ENCODE measurements at regions of chr7 and their contacts with region 1.

Region 1: GRCh38 chr7:100889761-100890634 is 483 bp upstream of the UFSP1 start:
- DNase-seq: peak; percentile 95 to 97 (median 96)
- ATAC-seq: peak; percentile 91 to 97 (median 94)
- H3K4me3 ChIP-seq: peak overlapping the region; percentile 48 to 81 (median 73)
- H3K27ac ChIP-seq: peak overlapping the region; percentile 76 to 93 (median 90)
- H3K4me1 ChIP-seq: peaks cover 4 to 59% (median 30%) of the 10 kb centered on the region in 12 donors
- H3K27me3 ChIP-seq: peaks cover 0 to 36% (median 6%) of the 10 kb centered on the region in 9 donors
- CTCF ChIP-seq: peak in 3 of 12 donors; percentile 15 to 26 (median 17)
- POLR2A ChIP-seq: peak in 1 of 2 donors; percentile 61

Region 2: GRCh38 chr7:100626530-100627237 is 263.3 kb before region 1 on chr7:
- intact Hi-C with region 1: no loop called
- DNase-seq: peak; percentile 78 to 91 (median 84)
- ATAC-seq: peak; percentile 89 to 99 (median 96)
- H3K4me3 ChIP-seq: peak overlapping the region in 9 of 12 donors; percentile 26 to 51 (median 43)
- H3K27ac ChIP-seq: peak overlapping the region in 1 of 12 donors; percentile 67
- H3K4me1 ChIP-seq: peaks cover 0 to 12% (median 4%) of the 10 kb centered on the region in 12 donors
- H3K27me3 ChIP-seq: no peaks in the 10 kb centered on the region
- CTCF ChIP-seq: no peak
- POLR2A ChIP-seq: no peak

Region 3: GRCh38 chr7:100763556-100764140 is 126.3 kb before region 1 on chr7:
- intact Hi-C with region 1: no loop called
- DNase-seq: no peak
- ATAC-seq: no peak
- H3K4me3 ChIP-seq: no peak overlapping the region
- H3K27ac ChIP-seq: no peak overlapping the region
- H3K4me1 ChIP-seq: no peaks in the 10 kb centered on the region
- H3K27me3 ChIP-seq: peaks cover 0 to 7% (median 0%) of the 10 kb centered on the region in 9 donors
- CTCF ChIP-seq: no peak
- POLR2A ChIP-seq: no peak

Region 4: DNA sequence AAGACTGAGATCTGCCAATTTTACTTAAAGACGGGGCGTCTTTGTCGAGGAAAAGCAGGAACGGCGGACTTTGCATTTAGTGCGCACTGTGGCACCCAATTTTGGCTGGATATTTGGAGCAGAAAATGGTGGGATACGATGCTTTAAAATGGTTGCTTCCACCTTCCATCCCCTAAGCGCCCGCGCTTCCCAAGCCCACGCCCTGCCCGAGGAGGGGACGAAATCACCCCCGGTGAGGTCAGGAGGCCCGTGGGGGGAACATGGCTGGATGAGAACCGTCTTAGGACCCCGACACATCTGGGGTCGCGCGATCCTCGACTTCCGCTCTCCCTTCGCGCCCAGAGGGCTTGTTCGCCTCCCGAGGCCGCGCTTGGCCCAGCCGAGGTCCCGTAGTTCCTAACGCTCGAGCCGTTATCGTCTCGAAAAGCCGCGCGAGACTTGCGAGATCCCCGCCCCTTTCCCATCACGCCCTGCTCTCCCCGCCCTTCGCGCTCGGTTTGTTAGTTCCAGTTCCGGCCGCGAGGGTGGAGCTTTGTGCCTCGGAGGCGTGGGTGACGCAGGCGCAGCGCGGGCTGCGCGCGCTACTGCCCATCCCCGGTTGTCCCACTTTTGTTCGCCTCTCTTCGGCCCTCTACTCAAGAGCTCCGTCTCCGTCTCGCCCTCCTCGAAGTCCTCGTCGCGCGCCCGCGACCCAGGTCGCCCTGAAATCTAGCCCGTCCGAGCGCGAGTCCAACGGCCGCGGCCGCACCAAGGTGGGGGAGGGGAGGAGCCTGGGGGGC is 15.2 kb before region 1 on chr7 and contains the start of gene SRRT:
- intact Hi-C with region 1: loop called in 1 of 10 experiments (anchors 1 kb)
- DNase-seq: peak; percentile 99
- ATAC-seq: peak; percentile 96 to 98 (median 96)
- H3K4me3 ChIP-seq: peak within 1 kb of the TSS; percentile 60 to 100 (median 86)
- H3K27ac ChIP-seq: peak within 1 kb of the TSS; percentile 89 to 99 (median 95)
- H3K4me1 ChIP-seq: peaks cover 3 to 52% (median 37%) of the 10 kb centered on the region in 12 donors
- H3K27me3 ChIP-seq: no peaks in the 10 kb centered on the region
- CTCF ChIP-seq: peak in 11 of 12 donors; percentile 15 to 58 (median 43)
- POLR2A ChIP-seq: peak; percentile 60 to 90
- total RNA-seq, gene SRRT: 31.0 to 62.2 (median 49.5) TPM

Region 5: GRCh38 chr7:101077303-101078089 is 187.5 kb after region 1 on chr7:
- intact Hi-C with region 1: loop called in 7 of 10 experiments (anchors 5 kb)
- DNase-seq: peak in 4 of 5 donors; percentile 59 to 74 (median 70)
- ATAC-seq: peak; percentile 58 to 91 (median 86)
- H3K4me3 ChIP-seq: no peak overlapping the region
- H3K27ac ChIP-seq: no peak overlapping the region
- H3K4me1 ChIP-seq: no peaks in the 10 kb centered on the region
- H3K27me3 ChIP-seq: no peaks in the 10 kb centered on the region
- CTCF ChIP-seq: peak; percentile 67 to 87 (median 78)
- POLR2A ChIP-seq: no peak

Region 6: GRCh38 chr7:101244375-101245146 is 354.6 kb after region 1 on chr7 and contains the start of gene FIS1:
- intact Hi-C with region 1: loop called in 1 of 10 experiments (anchors 10 kb)
- DNase-seq: peak; percentile 94 to 97 (median 95)
- ATAC-seq: peak; percentile 98 to 99 (median 98)
- H3K4me3 ChIP-seq: peak within 1 kb of the TSS; percentile 66 to 95 (median 82)
- H3K27ac ChIP-seq: peak within 1 kb of the TSS; percentile 84 to 99 (median 95)
- H3K4me1 ChIP-seq: peaks cover 5 to 55% (median 37%) of the 10 kb centered on the region in 12 donors
- H3K27me3 ChIP-seq: no peaks in the 10 kb centered on the region
- CTCF ChIP-seq: peak in 11 of 12 donors; percentile 15 to 99 (median 93)
- POLR2A ChIP-seq: peak; percentile 43 to 85
- total RNA-seq, gene FIS1: 249 to 491 (median 282) TPM

Region 7: DNA sequence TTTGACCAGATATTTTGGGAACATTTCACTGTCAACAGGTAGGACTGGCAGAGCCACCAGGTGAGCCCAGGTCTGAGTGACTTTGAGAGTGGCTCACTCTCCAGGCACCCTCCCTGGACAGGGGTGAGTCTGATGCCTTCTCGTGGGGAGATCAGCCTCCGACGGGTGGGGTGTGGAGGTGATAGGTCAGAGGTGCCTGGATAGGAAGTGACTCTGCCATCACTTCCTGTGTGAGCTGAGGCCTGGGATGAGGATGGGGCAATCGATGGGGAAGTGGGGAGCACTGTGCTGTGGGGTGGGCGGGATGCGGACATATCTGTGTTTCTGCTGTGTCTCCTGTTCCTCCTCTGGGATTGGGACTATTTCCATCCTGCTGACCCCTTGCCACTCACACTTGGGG is 397.0 kb after region 1 on chr7:
- intact Hi-C with region 1: loop called in 3 of 10 experiments (anchors 10 kb)
- DNase-seq: peak in 1 of 5 donors; percentile 26
- ATAC-seq: no peak
- H3K4me3 ChIP-seq: no peak overlapping the region
- H3K27ac ChIP-seq: no peak overlapping the region
- H3K4me1 ChIP-seq: peaks cover 0 to 6% (median 0%) of the 10 kb centered on the region in 12 donors
- H3K27me3 ChIP-seq: peaks cover 4 to 28% (median 9%) of the 10 kb centered on the region in 9 donors
- CTCF ChIP-seq: no peak
- POLR2A ChIP-seq: no peak

Measured in heart left ventricle (tissue), 16 donors.